ENCODE measurements at regions of chr19 and their contacts with region 1.

Region 1: DNA sequence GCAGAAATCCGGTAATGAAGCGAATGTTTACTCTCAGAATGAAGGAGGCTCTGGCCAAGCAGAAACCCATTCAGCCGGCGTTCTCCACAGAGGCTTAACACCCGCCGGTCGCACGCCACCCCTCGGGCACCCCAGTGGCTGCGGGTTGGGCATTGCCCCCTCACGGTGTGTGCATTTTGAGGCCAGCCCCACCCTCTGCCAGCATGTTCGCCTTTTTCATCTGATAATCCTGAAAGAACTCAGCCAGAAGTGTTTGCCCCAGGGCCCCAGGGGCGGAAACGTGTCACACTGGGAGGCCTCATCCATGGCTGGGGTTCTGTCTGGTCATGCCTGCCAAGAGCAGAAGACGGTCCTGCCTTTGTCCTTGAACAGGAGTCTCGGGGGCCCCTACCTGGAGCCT is 34.2 kb downstream of the COMP start:
- DNase-seq: no peak
- H3K4me3 ChIP-seq: no peak overlapping the region
- H3K27ac ChIP-seq: no peak overlapping the region
- H3K4me1 ChIP-seq: peaks cover 1 to 7% (median 5%) of the 10 kb centered on the region in 4 donors
- H3K27me3 ChIP-seq: no peaks in the 10 kb centered on the region
- CTCF ChIP-seq: no peak
- EP300 ChIP-seq: no peak
- POLR2A ChIP-seq: no peak

Region 2: DNA sequence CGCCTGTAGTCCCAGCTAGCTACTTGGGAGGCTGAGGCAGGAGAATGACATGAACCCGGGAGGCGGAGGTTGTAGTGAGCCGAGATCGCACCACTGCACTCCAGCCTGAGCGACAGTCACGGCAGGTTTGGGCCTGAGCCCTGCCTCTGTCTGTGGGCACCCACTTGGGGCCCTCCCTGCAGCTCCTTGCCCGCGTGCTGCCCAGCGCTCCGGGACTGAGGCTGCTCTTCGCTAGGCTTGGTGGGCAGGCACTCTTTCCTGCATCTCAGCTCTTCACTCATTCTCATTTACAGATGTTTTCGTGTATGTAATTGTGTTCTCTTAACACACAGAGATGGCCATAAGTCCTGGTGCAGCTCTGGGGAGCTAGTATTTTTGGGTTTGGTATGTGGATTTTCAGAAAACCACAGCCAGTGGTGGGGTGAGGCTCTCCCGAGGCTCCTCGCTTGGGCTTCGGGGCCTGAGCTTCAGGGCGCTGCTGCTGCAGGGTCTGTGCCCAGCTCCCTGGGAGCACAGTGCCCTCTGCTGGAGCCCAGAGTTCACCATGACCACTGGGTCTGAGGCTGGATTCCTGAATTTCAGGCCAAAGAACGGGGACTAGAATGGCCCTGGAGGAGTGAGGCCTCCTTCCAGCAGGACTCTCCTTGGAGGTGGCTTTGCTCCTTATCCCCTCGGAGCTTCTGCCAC is 90.1 kb after region 1 on chr19:
- in situ Hi-C with region 1: no loop called
- intact Hi-C with region 1: no loop called
- DNase-seq: peak; percentile 80
- H3K4me3 ChIP-seq: no peak overlapping the region
- H3K27ac ChIP-seq: peak overlapping the region; percentile 39 to 78 (median 69)
- H3K4me1 ChIP-seq: peaks cover 20 to 50% (median 40%) of the 10 kb centered on the region in 4 donors
- H3K27me3 ChIP-seq: no peaks in the 10 kb centered on the region
- CTCF ChIP-seq: peak; percentile 68 to 82 (median 77)
- EP300 ChIP-seq: no peak
- POLR2A ChIP-seq: no peak

Region 3: DNA sequence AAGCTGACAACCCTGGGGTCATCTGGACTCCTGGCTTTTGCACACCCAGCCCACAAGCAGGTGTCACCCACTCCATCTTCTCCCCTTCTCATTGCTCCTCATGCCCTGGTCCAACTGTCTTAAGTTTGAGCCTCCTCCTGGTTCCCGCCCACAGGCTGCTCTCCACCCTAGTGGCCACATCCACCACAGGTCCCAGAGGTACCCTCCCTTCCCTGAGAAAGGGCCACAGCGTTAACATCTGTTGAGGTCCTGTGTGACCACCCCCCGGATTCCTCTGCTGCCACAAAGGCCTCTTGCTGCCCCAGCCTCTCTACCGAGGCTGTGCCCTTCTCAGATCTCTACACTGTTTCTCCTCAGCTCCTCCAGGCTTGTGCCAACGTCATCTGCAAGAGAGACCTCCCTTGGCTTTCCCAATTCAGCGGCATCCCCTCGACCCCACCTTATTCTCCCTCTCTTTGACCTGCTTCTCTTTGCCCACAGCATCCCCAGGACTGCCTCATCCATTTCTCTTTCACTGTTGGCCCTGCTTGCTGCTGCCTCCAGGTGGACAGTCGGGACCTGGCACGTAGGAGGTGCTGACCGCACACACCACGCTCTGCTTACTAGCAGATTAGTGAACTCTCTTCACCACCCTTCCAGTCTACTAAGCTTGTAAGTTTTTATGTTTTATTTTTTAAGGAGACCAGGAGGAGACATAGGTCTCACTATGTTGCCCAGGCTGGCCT is 243.2 kb after region 1 on chr19:
- in situ Hi-C with region 1: no loop called
- intact Hi-C with region 1: loop called (anchors 10 kb)
- DNase-seq: no peak
- H3K4me3 ChIP-seq: no peak overlapping the region
- H3K27ac ChIP-seq: no peak overlapping the region
- H3K4me1 ChIP-seq: no peaks in the 10 kb centered on the region
- H3K27me3 ChIP-seq: no peaks in the 10 kb centered on the region
- CTCF ChIP-seq: no peak
- EP300 ChIP-seq: no peak
- POLR2A ChIP-seq: no peak